ENCODE measurements at regions of chr15 and their contacts with region 1.

Region 1: GRCh38 chr15:25378501-25378901 is 60.3 kb downstream of the UBE3A start:
- DNase-seq: no peak
- H3K4me3 Mint-ChIP-seq: no peak overlapping the region
- H3K27ac Mint-ChIP-seq: peak overlapping the region; percentile 20
- H3K4me1 Mint-ChIP-seq: no peaks in the 10 kb centered on the region
- H3K27me3 Mint-ChIP-seq: no peaks in the 10 kb centered on the region

Region 2: GRCh38 chr15:25366058-25366457 is 12.4 kb before region 1 on chr15:
- intact Hi-C with region 1: loop called (anchors 1 kb)
- DNase-seq: no peak
- H3K4me3 Mint-ChIP-seq: no peak overlapping the region
- H3K27ac Mint-ChIP-seq: no peak overlapping the region
- H3K4me1 Mint-ChIP-seq: peaks cover 16% of the 10 kb centered on the region
- H3K27me3 Mint-ChIP-seq: no peaks in the 10 kb centered on the region

Region 3: DNA sequence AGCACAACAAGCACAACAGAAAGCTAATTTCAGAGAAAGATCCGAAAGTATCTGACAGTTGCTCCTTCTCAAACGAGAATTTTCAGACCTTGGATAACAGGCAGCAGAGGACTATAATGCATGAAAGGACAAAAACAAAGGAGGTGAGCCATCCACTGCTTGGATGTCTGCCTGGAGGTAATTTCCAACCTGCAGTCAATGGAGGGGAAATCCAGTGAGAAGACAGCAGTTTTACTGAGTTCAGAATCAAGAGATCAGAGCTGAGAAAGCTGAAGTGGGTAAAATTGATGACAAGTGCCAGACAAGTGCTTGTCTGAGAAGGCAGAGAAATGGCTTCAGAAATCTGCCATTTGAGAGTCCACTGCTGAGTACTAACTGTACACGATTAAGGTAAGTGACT is 38.2 kb after region 1 on chr15:
- intact Hi-C with region 1: no loop called
- DNase-seq: no peak
- H3K4me3 Mint-ChIP-seq: no peak overlapping the region
- H3K27ac Mint-ChIP-seq: no peak overlapping the region
- H3K4me1 Mint-ChIP-seq: peaks cover 32% of the 10 kb centered on the region
- H3K27me3 Mint-ChIP-seq: no peaks in the 10 kb centered on the region

Region 4: DNA sequence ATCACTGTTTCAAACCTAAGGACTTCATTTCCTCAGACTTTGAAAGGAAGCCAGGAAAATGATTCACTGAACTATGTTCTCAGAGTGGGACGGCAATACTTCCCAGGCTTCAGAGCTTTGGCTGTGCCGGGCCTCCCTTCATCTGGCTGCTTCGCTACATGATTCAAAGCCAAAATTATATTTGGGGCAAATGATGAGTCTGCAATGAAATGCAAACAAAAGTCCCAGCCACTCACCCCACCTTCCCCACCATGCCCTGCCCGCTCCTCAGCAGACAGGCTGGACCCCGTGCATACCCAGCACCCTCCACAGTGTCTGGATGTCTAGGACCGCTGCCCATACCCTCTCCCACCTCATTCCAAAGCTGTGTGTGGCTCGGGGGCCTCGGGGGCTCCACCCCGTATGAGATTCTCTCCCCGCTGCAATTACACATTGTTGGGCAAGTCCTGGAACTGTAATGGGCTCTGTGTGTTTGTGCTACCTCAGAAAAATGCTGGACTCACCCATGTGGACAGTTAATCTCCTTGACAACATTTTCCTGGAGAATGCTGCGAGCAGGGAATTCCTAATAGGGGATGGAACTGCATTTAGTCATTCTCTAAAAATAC is 452.4 kb after region 1 on chr15:
- intact Hi-C with region 1: no loop called
- DNase-seq: no peak
- H3K4me3 Mint-ChIP-seq: no peak overlapping the region
- H3K27ac Mint-ChIP-seq: no peak overlapping the region
- H3K4me1 Mint-ChIP-seq: peaks cover 30% of the 10 kb centered on the region
- H3K27me3 Mint-ChIP-seq: no peaks in the 10 kb centered on the region